Left ventricle myocardium superior (tissue), 1 donor: ENCODE measurements at regions of chr10 and their contacts with region 1.

Region 1: DNA sequence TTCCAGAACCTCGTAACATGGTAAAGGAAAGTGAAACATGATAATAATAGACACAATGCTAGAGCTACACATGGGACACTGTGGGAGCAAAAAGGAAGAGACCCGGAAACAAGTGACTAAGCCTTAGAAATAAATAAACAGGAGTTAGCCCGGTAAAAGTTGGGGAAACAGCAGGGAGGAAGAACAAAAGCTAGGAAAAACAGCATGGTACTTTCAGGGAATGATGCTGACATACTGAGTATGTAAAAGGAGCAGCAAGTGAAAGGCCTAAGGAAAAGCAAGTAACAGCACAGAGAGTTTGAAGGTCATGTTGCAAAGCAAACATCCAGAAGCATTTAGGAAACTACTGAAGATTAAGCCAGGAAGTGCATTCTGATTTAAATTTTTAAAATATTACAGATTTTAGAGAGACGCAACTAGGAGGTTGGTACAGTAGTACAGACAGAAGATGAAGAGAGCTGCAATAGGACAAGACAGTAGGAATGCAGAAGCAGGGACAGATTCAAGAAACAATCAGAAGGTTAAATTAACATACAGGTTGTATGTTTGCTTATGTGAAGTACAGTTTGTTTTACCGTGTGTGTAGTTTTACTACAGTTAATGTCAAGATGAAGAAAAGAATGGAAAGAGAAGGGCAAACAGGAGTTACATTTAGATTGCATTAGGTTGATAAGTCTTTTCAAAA is 63.7 kb downstream of the ARHGAP12 start:
- DNase-seq: no peak
- ATAC-seq: peak; percentile 37

Region 2: GRCh38 chr10:31819391-31819820 is 45.6 kb before region 1 on chr10:
- intact Hi-C with region 1: no loop called
- DNase-seq: no peak
- ATAC-seq: peak; percentile 63

Region 3: DNA sequence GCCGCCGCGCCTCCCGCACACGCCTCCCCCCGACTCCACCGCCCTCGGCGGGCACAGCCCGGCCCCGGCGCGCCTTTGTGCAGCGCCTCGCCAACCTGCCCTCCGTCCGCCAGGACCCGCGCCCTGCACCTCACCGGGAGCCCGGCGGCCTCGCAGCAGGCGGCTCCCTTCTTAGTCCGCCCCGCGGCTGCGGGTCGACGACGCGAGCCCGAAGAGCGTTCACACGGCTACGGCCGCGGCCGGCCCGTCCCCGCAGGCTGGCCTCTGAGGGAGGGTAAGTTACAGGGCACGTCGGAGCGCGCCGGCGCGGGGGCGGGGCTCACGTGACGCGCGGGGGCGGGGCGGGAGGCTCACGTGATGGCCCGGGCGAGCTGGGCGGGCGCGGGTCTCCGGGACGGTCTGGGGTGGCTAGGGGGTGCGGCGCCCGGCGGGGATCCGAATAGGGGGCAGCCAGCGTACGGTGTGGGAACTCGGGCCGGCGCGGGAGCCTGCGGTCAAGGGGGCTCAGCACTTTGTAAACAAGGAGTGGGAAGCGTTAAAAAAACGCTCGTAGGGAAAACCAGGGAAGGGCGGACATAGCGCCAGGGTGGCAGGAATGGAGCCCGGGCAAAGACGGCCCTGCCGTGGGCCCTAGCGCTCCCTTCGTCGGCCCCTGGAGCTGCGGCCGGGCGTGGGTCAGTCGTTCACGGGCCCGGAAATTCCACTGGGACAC is 63.7 kb after region 1 on chr10 and contains the start of gene ARHGAP12:
- intact Hi-C with region 1: loop called (anchors 10 kb)
- DNase-seq: peak; percentile 96
- ATAC-seq: peak; percentile 98
- total RNA-seq, gene ARHGAP12: 21.1 TPM

Region 4: DNA sequence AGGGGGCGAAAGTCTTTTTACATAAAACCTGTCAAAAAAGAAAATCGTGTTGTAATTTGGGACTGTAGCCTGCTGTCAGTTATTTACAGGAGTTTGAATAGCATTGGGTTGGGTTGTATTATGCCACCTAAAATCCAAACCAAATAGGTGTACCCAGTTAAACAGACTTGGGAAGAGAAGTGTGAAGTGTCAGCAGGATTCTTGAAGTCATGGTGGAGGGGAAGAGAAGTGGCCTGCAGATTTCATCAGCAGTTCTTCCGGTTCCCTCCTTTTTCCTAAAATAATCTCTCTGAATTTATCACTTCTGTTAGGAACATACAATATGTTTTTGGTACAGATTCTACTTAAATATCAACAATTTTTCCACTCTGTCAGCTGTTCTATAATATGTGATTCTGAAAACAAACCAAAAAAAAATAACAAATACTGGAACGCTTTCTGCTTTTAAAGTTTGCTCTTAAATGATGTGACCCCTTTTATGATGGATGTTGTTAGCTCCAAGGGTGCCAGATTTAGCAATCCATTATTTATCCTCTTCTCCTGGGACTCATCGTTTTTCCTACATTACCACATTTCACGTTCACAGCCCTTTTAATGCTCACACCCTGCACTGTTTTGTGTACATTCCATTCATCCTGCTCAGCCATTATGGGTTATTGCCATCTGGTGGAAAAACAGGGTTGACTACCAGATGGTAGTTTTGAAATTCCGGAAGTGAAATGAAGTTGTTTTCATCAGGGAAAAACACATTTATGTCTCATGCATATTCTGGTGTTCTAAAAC is 82.4 kb after region 1 on chr10:
- intact Hi-C with region 1: loop called (anchors 5 kb)
- DNase-seq: no peak
- ATAC-seq: peak; percentile 94